ENCODE measurements at regions of chr1 and their contacts with region 1.

Region 1: GRCh38 chr1:152941021-152941711 is 5.8 kb upstream of the SPRR5 start:
- DNase-seq: no peak
- H3K4me3 ChIP-seq: no peak overlapping the region
- H3K27ac ChIP-seq: no peak overlapping the region
- H3K4me1 ChIP-seq: no peaks in the 10 kb centered on the region
- H3K27me3 ChIP-seq: no peaks in the 10 kb centered on the region
- CTCF ChIP-seq: no peak
- POLR2A ChIP-seq: no peak

Region 2: GRCh38 chr1:152585586-152585985 is 355.6 kb before region 1 on chr1:
- intact Hi-C with region 1: loop called (anchors 5 kb)
- DNase-seq: no peak
- H3K4me3 ChIP-seq: no peak overlapping the region
- H3K27ac ChIP-seq: no peak overlapping the region
- H3K4me1 ChIP-seq: no peaks in the 10 kb centered on the region
- H3K27me3 ChIP-seq: no peaks in the 10 kb centered on the region
- CTCF ChIP-seq: no peak
- POLR2A ChIP-seq: no peak

Measured in breast epithelium (tissue), 4 donors.